Colonic mucosa (tissue), 4 donors: ENCODE measurements at regions of chr17 and their contacts with region 1.

Region 1: DNA sequence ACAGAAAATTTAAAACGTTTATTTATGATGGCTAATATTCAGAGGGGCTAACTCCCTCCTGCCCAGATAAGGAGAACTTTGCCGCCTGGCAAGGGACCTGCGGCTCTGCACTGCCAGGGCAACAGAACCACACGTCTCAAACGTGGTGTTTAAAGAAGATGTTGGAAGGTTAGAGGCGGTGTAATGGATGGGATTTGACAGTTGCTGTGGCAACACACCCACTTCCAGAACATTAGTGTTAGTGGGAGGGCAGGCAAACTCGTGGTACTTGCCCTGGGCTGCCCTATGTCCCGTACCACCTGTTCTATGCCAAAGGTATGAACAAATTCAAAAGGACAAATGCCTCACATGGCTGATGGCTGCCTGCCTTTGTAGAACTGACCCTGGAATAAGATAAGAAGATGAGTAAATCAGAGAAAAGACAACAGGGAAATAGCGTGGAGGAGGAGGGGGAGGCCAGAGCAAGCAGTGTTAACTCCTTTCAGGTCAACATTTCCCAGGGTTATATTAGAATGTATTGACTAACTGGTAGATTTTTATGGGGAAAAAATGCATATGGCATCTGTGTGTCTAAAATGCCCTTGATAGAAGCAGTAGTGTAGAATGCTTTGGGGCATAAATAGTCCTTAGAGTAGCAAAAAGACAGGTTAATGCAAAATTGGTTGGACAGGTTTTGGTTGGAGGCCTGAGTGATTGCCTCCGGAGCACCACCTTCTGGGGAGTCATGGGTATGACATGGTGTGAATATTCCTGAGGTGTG is 30.8 kb downstream of the HLF start:
- DNase-seq: peak; percentile 57
- H3K4me3 ChIP-seq: no peak overlapping the region
- H3K27ac ChIP-seq: no peak overlapping the region
- H3K4me1 ChIP-seq: no peaks in the 10 kb centered on the region
- H3K27me3 ChIP-seq: no peaks in the 10 kb centered on the region
- CTCF ChIP-seq: peak; percentile 83

Region 2: DNA sequence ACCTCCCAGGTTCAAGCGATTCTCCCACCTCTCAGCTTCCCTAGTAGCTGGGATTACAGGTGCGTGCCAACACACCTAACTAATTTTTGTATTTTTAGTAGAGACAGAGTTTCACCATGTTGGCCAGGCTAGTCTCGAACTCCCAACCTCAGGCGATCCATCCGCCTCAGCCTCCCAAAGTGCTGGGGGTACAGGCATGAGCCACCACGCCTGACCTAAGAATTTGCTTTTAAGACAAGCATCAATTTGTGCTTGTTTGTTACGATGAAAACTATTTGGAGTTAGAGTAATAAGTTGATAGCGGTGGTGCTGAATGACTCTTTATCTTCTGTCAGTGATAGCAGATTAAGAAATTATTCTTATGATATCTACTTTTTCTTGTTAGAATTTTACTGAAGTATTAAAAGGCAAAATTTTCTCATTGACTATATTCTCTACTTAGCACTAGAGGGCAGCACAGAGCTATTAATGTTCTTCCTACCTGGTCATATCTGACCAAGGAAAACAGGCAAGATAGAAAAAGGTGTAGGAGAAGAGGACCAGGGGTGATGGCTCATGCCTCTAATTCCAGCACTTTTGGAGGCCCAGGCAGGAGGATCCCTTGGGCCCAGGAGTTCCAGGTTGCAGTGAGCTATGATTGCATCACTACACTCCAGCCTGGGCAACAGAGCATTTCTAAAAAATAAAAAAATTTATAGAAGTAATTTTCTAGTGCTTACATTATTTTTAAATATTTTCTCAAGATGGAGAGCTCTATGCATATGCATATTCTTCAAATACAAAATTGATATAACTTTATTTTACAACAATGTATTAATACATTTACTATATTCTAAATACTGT is 302.6 kb before region 1 on chr17:
- intact Hi-C with region 1: loop called (anchors 5 kb)
- DNase-seq: no peak
- H3K4me3 ChIP-seq: no peak overlapping the region
- H3K27ac ChIP-seq: no peak overlapping the region
- H3K4me1 ChIP-seq: no peaks in the 10 kb centered on the region
- H3K27me3 ChIP-seq: no peaks in the 10 kb centered on the region
- CTCF ChIP-seq: peak; percentile 55

Region 3: DNA sequence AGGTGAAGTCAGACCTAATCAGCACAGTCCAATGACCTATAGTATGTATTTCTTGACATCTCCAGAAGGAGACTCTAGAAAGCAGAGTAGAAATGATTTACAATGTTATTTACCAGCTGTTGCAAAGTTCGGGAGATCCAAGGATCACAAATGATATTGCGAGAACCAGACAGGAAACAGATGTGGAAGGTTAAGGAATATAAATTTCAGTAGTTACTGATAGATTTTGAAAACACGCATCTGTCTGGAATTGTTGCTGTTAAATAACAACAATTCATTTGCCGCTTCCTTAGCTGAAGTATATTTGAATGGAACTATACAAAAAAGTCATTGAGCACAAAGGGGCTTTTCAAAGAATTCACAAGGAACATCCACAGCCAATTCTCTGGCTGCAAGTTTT is 255.0 kb before region 1 on chr17:
- intact Hi-C with region 1: loop called (anchors 10 kb)
- DNase-seq: no peak
- H3K4me3 ChIP-seq: no peak overlapping the region
- H3K27ac ChIP-seq: no peak overlapping the region
- H3K4me1 ChIP-seq: no peaks in the 10 kb centered on the region
- H3K27me3 ChIP-seq: no peaks in the 10 kb centered on the region
- CTCF ChIP-seq: no peak

Region 4: GRCh38 chr17:55067697-55068439 is 227.7 kb before region 1 on chr17:
- intact Hi-C with region 1: no loop called
- DNase-seq: no peak
- H3K4me3 ChIP-seq: no peak overlapping the region
- H3K27ac ChIP-seq: no peak overlapping the region
- H3K4me1 ChIP-seq: no peaks in the 10 kb centered on the region
- H3K27me3 ChIP-seq: no peaks in the 10 kb centered on the region
- CTCF ChIP-seq: no peak

Region 5: DNA sequence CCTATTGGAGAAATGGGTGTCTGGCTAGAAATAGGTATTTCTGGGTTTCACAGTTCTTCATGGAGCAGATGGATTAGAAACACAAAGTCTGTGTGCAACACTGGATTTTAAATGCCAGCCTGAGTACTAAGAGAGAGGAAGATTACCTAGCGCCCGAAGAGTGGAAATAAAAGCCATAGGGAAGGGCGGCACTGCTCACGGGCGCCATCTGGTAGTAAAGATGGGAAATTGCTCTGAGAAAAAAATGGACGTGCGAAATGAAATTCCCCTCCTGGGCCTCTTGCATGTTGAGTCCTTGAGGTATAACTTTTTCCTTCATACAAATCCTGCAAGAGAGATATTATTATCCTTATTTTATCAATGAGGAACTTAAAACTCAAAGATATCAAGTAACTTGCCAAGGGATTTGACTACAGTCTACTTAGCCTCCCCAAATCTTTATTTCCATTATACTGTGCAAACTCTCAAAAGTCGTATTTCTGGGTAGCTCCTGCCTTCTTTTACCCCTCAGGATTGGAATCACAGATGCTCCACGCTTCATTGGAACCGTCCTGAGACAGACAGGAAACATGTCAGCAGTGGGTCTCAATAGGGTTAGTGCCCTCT is 53.3 kb after region 1 on chr17:
- intact Hi-C with region 1: loop called (anchors 10 kb)
- DNase-seq: peak; percentile 46
- H3K4me3 ChIP-seq: no peak overlapping the region
- H3K27ac ChIP-seq: no peak overlapping the region
- H3K4me1 ChIP-seq: no peaks in the 10 kb centered on the region
- H3K27me3 ChIP-seq: no peaks in the 10 kb centered on the region
- CTCF ChIP-seq: peak; percentile 91

Region 6: DNA sequence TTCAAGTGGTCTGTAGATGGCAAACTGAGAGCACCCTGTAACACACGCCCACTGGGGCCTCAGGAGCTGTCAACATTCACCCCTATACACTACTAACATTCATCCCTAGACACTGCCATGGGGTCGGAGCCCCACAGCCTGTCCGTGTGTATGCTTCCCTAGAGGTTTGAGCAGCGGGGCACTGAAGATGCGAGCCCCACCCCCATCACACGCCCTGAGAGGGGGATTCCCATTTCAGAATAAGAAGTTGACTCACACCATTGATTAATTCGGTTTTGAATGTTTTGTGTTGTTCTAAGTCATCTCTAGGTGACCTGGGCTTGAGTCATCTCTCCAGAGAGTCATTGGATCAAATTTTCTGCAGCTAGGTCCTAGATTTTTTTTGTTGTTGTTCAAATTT is 163.4 kb after region 1 on chr17:
- intact Hi-C with region 1: no loop called
- DNase-seq: no peak
- H3K4me3 ChIP-seq: no peak overlapping the region
- H3K27ac ChIP-seq: no peak overlapping the region
- H3K4me1 ChIP-seq: no peaks in the 10 kb centered on the region
- H3K27me3 ChIP-seq: no peaks in the 10 kb centered on the region
- CTCF ChIP-seq: no peak